ENCODE measurements at regions of chrX and their contacts with region 1.

Region 1: GRCh38 chrX:118189628-118190027 is 73.0 kb upstream of the KLHL13 start:
- DNase-seq: peak in 3 of 5 donors; percentile 19 to 62 (median 24)
- ATAC-seq: peak; percentile 80 to 93 (median 86)
- H3K4me3 ChIP-seq: no peak overlapping the region
- H3K27ac ChIP-seq: peak overlapping the region in 4 of 12 donors; percentile 10 to 69 (median 50)
- H3K4me1 ChIP-seq: no peaks in the 10 kb centered on the region
- H3K27me3 ChIP-seq: no peaks in the 10 kb centered on the region
- CTCF ChIP-seq: peak in 1 of 12 donors; percentile 7
- POLR2A ChIP-seq: no peak

Region 2: GRCh38 chrX:118116713-118117550 is 72.7 kb before region 1 on chrX and contains the start of gene KLHL13:
- intact Hi-C with region 1: loop called in 1 of 10 experiments (anchors 2 kb)
- DNase-seq: peak; percentile 43 to 57 (median 45)
- ATAC-seq: peak; percentile 51 to 86 (median 82)
- H3K4me3 ChIP-seq: peak within 1 kb of the TSS; percentile 37 to 82 (median 62)
- H3K27ac ChIP-seq: peak within 1 kb of the TSS; percentile 47 to 86 (median 77)
- H3K4me1 ChIP-seq: peaks cover 0 to 4% (median 0%) of the 10 kb centered on the region in 12 donors
- H3K27me3 ChIP-seq: peaks cover 0 to 11% (median 0%) of the 10 kb centered on the region in 9 donors
- CTCF ChIP-seq: no peak
- POLR2A ChIP-seq: no peak
- total RNA-seq, gene KLHL13: 5.9 to 14.2 (median 9.0) TPM